Activated CD4-positive, alpha-beta memory T cell treated with anti-CD3 and anti-CD28 coated beads for 36 hours (primary cell): ENCODE measurements at regions of chr16 and their contacts with region 1.

Region 1: DNA sequence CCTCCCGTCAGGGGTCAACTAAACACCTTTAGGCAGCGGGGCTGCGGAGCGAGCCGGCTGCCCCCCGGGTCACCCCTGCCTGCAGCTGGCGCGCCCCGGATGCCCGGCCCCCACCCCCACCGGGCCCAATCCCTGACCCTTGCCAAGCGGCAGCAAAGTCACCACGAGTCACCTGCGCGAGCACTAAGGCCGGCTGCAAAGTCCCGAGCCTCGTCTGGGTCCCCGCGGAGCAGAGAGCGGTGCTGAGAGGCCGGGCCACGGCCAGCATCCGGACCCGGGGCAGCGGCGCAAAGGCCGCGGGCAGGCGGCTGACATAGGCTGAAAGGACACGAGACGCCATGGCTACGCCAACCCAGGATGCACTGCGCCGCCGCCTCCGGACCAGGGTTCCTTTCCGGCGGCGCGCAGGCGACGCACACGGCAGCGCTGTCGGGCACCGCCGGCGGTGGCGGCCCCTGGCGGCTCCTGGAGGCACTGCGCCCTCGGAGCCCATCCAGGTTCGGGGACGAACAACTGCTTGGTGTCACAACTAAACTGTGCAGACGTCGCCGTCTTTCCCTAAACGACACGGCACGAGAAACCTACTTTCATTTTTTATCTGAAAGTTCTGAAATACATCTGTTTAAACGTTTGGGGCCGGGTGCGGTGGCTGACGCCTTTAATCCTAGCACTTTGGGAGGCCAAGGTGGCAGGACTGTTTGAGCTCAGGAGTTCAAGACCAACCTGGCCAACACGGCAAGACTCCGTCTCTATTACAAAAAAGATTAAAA is at the start of gene NDUFAB1:
- DNase-seq: peak; percentile 94
- H3K4me3 Mint-ChIP-seq: peak within 1 kb of the TSS; percentile 81
- H3K27ac Mint-ChIP-seq: peak within 1 kb of the TSS; percentile 85
- H3K4me1 Mint-ChIP-seq: peaks cover 35% of the 10 kb centered on the region
- H3K27me3 Mint-ChIP-seq: no peaks in the 10 kb centered on the region
- total RNA-seq, gene NDUFAB1: 152 to 153 TPM

Region 2: DNA sequence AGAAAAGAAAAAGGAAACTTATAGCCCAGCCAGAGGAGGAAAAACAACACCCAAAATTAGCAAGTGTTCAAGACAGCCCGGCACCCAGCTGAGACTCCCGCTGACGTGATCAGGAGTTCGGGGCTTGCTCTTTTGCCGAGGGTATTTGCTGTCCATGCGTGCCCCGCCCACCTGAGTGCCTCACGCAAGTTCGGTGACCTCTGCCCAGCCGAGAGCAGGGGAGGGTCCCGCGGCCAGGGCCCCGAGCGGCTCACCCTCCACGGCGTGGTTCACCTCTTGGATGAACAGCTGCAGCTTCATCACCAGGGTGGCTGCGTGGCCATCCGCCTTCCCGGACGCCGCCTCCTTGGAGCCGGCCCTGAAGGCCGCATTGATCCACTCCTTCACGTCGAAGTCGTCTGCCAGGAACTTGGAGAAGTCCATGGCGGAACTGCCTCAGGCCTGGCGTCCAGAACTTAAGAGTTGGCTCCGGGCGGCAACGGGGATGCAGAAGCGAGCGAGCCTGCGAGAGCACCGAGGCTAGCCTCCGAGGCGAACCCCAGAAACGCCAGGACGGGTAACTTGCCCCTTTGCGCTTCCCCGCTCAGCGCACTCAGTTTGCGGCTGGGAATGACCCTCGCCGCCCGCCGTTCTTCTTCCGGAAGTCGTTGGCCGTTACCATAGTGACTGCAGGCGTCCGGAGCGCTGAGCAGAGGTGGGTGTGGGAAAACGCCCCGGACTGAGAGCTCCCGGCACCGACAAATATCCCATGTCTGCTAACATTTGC is 143.4 kb before region 1 on chr16 and contains the start of gene COG7:
- CTCF ChIA-PET with region 1: no interaction called
- POLR2A ChIA-PET with region 1: no interaction called
- intact Hi-C with region 1: loop called (anchors 2 kb)
- DNase-seq: peak; percentile 91
- H3K4me3 Mint-ChIP-seq: peak within 1 kb of the TSS; percentile 91
- H3K27ac Mint-ChIP-seq: peak within 1 kb of the TSS; percentile 52
- H3K4me1 Mint-ChIP-seq: peaks cover 25% of the 10 kb centered on the region
- H3K27me3 Mint-ChIP-seq: no peaks in the 10 kb centered on the region
- total RNA-seq, gene COG7: 17.0 to 18.1 TPM

Region 3: GRCh38 chr16:23640931-23641765 is 45.0 kb after region 1 on chr16 and contains the starts of genes DCTN5 and PALB2:
- CTCF ChIA-PET with region 1: interaction called, 7 read pairs
- POLR2A ChIA-PET with region 1: no interaction called
- intact Hi-C with region 1: loop called (anchors 1 kb)
- DNase-seq: peak; percentile 94
- H3K4me3 Mint-ChIP-seq: peak within 1 kb of the TSS; percentile 99
- H3K27ac Mint-ChIP-seq: peak within 1 kb of the TSS; percentile 94
- H3K4me1 Mint-ChIP-seq: peaks cover 27% of the 10 kb centered on the region
- H3K27me3 Mint-ChIP-seq: no peaks in the 10 kb centered on the region
- total RNA-seq, gene DCTN5: 55.6 to 56.1 TPM
- total RNA-seq, gene PALB2: 20.3 to 20.8 TPM